Cardiac septum (tissue), 1 donor: ENCODE measurements at regions of chr20 and their contacts with region 1.

Region 1: DNA sequence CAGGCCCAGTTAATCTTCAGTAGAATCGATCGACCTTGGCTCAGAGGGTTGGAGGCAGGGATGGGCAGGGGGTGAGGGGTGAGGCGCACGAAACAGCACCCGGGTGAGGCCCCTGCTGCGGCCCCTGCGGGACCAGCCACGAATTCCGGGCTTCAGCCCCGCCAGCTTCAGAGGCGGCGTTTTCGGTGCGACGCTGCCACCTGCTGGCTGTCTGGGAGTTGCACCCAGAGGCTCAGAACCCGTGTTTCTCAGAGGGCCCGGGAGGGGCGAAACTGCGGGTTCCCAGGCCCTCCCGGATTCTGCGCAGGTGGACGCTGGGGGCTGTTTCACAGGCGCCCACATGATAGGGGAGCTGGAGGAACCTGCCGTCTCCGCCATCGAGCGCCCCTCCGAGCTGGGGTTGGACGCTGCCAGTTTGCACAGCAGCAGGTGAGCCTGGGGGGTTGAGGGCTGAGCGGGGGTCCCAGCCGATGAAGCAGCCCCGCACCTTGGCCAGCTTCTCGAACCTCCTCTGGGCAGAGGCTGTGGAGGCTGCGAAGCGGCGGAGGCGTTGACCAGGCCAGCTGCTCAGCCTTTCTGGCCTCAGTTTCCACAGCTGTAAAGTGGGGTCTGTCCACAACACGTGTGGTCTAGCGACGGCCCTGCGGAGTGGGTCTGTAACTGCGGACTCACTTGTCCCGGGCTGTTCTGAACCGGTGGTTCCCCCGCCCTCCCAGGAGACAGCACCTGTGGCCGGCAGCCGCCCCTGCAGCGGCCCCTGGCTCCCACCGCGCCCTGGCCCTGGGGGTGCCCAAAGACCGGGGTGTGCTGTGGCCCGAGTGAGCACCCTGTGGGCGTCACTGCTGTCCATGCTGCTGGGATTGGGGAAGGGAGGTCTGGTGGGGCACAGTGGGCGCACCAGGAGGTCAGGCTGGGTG is 2.5 kb upstream of the BHLHE23 start:
- DNase-seq: peak; percentile 85

Region 2: DNA sequence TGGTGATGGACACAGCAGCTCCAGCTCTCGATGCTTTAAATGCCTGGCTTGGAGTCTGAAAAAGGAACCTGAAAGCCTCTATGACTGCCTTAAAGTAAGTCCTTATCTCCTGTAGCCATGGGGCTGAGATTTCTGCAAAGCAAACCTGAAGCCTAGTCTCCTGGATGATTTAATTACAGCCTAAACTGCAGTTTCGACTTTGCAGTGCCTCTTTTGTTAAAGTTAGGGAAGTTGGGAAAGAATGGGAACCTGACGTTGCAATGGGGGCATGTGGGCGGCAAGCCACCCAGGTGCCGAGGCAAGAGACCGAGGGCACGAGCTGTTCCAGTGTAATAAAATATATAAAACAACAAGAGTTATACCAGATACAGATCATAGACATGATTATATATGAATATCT is 136.0 kb before region 1 on chr20:
- intact Hi-C with region 1: loop called (anchors 1 kb)
- DNase-seq: no peak

Region 3: DNA sequence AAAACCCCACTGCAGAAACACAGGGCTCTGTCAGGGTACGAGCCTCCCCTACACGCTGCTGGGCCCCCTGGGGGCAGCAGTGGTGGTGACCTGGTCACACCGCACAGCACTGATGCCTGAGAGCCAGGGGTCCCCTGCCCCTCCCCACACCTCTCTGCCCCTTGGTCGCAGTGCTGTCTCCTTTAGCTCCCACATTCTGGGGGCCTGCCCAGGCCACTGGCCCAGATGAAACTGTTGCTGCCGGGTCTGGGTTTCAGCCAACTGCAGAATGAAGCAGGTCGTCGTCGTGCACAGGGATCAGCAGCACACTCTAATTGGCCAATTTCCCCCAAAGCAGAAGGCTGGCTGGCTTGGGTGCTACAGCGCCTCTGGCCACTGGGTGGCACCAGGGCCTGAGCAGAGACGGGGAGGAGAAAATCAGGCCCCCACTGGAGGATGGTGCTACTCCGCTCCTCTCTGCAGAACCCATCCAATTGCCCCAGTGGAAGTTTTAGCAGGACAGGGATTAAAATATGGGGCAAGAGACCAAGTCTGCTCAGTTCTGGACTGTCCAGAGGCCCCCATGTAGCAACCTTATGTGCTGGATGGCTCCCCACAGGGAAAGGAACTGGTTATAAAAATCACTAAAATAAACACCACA is 109.1 kb before region 1 on chr20:
- intact Hi-C with region 1: loop called (anchors 5 kb)
- DNase-seq: peak; percentile 87

Region 4: DNA sequence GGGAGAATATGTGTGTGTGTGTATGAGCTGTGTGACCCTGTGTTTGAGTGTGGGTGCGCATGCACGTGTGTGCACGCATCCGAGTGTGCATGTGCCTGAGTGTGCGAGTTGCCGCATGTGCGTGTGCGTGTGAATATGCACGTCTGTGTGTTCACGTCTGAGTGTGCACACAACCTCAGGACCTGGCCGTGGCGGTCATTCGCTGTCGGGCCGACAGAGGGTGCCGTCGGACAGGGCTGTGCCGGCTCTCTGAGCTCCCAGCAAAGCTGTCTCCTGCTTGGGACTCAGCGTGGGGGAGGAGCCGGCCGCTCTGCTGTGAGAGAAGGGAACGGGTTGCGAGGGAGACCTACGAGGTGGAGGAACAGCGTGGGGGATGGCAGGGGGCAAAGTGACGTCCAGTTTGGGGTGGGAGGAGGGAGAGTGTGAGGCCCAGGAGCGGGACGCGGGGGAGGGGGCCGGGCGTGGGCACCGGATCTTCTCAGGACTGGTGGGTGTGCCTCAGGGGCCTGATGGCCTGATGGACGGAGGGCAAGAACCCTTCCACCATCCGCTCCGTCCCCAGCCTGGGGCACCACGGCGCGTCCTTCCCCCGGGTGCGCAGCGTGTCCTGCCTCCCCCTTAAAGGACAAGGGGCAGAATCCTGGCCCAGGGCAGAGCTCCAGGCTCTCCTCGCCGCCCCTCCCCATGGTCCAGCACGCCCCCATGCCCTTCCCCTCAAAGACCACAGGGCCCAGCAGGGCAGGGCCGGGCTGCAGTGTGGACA is 36.9 kb before region 1 on chr20:
- intact Hi-C with region 1: loop called (anchors 2 kb)
- DNase-seq: peak; percentile 88

Region 5: DNA sequence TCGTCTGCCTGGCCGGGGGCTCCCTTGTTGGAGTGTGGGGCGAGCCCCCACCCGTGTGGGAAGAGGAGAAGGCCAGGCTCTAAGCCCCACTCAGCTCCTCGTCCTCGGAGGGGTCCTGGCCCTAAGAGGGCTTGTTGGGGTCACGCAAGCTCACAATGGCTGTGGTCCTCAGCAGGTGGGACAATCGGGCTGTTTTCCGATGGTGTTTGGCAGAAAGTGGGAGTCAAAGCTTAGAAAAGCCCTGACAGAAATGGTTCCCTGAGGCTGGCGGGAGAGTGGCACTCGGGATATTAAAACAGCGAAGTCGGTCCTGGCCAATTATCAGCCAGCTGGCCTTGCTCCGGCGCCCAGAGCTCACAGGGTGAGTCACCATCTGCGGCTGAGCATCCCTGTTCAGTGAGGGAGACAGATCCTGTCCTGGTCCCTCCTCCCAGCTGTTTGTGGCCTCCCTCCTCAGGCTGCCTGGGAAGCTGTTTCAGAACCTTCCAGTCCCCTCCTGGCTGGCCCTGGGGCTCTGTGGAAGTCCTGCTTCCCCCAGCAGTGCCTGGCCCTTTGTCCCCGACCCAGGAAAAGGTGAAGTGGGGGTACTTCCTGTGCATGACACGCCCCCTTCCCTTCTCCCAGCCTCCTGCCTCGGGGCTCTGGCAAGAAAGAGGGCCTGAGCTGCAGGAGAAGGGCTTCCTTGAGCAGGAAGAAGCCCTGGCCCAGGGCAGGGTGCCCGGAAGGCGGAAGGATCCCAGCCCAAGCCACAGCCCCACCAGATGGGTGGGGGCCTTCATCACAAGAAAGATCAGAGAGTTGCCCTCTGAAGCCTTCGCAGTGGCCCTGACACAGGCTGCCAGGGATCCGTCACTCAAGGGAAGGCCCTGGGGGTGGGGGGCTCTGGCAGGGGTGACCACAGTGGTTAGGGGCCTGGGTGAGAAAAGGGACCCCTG is 51.0 kb after region 1 on chr20:
- intact Hi-C with region 1: no loop called
- DNase-seq: peak; percentile 53